Dendritic cell treated with granulocyte-macrophage colony-stimulating factor and Interleukin-4, amounts not matched to agents 40 ng/mL and 50 ng/mL, for 4 days (primary cell): ENCODE measurements at regions of chr3 and their contacts with region 1.

Region 1: DNA sequence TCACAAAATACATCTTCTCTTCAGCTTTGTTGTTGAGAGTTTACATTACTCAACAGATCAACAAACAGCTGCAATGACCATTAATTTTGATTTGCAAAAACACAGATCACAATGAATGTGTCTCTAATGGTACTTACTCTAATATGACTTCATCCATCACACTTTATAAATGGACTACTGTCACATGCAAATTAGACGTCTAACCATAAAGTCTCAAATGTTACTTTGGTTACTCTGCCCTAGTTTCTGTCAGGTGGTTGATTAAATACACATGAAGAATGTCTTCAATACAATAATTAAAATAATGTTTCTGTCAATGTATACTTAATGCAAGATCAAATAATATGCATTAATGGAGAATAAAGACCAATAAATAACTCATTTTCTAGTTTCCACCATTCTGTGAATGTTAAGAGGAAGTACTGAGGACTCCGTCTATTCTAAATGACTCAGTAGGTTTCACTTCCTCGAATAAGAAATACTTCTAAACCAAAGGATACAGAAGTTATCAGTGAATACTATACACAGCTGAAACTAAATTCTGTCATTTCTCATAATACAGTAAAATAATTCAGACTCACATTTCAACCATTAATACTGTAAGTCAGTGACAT is 145.8 kb downstream of the CBLB start:
- H3K4me3 Mint-ChIP-seq: no peak overlapping the region
- H3K27ac Mint-ChIP-seq: no peak overlapping the region
- H3K4me1 Mint-ChIP-seq: peaks cover 12% of the 10 kb centered on the region
- H3K27me3 Mint-ChIP-seq: no peaks in the 10 kb centered on the region

Region 2: GRCh38 chr3:105836533-105836932 is 113.5 kb after region 1 on chr3:
- intact Hi-C with region 1: loop called (anchors 10 kb)
- H3K4me3 Mint-ChIP-seq: no peak overlapping the region
- H3K27ac Mint-ChIP-seq: no peak overlapping the region
- H3K4me1 Mint-ChIP-seq: peaks cover 6% of the 10 kb centered on the region
- H3K27me3 Mint-ChIP-seq: no peaks in the 10 kb centered on the region